Calu3 (cell line): ENCODE measurements at regions of chr11 and their contacts with region 1.

Region 1: DNA sequence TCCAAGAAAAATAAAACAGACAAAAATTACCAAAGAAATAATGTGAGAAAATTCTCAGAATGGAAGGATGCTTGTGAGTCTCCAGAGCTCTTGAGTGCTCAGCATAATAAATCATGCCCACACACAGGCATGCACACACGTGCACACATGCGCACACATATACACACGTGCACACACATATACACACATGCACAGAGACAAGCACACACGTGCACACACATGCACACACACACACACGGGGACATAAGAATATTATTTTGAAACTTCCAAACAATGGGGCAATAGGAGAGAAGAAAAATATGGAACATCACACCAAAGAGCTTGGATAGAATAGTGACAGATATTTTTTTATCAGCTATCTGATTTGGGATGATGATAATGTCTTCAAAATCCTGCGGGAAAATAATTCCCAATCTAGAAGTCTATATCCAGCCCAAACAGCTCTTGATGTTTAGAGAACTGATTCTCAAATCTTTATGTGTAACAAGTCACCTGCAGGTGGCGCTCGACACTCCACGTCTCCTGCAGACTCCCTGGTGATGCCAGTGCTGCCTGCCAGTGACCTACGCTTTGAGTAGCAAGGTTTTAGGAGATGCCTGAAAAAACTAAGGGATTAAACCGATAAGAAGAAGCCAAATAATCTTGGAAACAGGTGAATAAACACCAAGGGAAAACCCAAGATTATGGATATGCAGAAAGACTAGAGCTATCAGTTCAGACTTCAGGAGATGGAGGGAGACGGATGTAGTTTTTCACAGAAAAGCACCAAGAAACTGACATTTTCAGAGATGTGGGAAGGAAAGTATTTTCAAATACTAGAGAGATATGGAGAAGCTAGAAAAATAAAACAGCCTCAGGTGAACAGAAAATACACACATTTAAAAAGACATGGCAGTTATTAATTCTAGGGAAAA is 743.6 kb downstream of the ETS1 start:
- DNase-seq: peak; percentile 72
- H3K4me3 Mint-ChIP-seq: no peak overlapping the region
- H3K27ac Mint-ChIP-seq: no peak overlapping the region
- H3K4me1 Mint-ChIP-seq: no peaks in the 10 kb centered on the region
- H3K27me3 Mint-ChIP-seq: no peaks in the 10 kb centered on the region
- CTCF ChIP-seq: no peak

Region 2: GRCh38 chr11:127683321-127683720 is 160.4 kb before region 1 on chr11:
- CTCF ChIA-PET with region 1: no interaction called
- intact Hi-C with region 1: no loop called
- DNase-seq: no peak
- H3K4me3 Mint-ChIP-seq: no peak overlapping the region
- H3K27ac Mint-ChIP-seq: no peak overlapping the region
- H3K4me1 Mint-ChIP-seq: no peaks in the 10 kb centered on the region
- H3K27me3 Mint-ChIP-seq: no peaks in the 10 kb centered on the region
- CTCF ChIP-seq: no peak

Region 3: GRCh38 chr11:128005562-128005961 is 161.8 kb after region 1 on chr11:
- CTCF ChIA-PET with region 1: no interaction called
- intact Hi-C with region 1: loop called (anchors 10 kb)
- DNase-seq: no peak
- H3K4me3 Mint-ChIP-seq: no peak overlapping the region
- H3K27ac Mint-ChIP-seq: no peak overlapping the region
- H3K4me1 Mint-ChIP-seq: no peaks in the 10 kb centered on the region
- H3K27me3 Mint-ChIP-seq: no peaks in the 10 kb centered on the region
- CTCF ChIP-seq: no peak

Region 4: GRCh38 chr11:128021349-128022006 is 177.7 kb after region 1 on chr11:
- CTCF ChIA-PET with region 1: no interaction called
- intact Hi-C with region 1: loop called (anchors 1 kb)
- DNase-seq: no peak
- H3K4me3 Mint-ChIP-seq: no peak overlapping the region
- H3K27ac Mint-ChIP-seq: no peak overlapping the region
- H3K4me1 Mint-ChIP-seq: peaks cover 9% of the 10 kb centered on the region
- H3K27me3 Mint-ChIP-seq: peaks cover 22% of the 10 kb centered on the region
- CTCF ChIP-seq: no peak